ENCODE measurements at regions of chr1 and their contacts with region 1.

Region 1: DNA sequence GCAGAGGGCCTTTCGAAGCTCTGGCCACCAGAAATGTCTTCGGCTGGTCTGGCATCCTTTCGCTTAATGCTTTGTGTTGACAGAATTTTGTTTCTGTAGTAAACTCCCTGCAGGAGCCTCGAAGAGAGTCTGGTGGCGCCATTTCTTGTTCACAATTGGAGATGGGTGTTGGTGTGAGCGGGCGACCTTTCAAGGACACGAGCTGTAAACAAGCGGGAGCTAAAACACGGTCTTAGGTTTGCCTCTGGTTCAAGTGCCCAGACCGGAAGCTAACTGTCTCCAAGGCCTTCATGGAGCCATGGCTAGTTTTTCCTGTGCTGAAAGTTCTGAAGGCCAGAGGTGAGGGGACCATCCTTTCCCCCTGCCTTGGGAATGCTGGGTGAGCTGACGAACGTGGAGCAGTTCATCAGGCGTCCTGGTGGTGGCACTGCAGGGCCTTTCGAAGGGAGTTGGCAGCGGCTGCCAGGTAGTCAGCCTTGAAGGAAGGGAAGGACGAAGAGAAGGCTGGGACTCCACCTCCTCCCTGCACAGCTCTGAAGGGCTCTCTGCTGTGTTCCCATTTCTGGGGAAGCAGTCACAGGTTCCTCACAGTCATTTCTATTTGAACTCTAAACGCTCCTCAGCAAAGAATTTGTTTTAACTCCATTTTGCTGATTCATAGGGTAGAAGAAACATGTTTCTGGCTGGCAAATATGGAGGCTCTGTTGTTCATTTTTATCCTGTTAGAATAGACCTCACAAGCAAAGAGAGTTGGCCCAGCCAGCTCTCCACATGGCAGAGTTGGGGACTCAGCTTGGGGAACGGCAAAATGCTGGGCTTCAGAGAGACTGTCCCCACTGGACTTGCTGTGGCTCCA is 35.2 kb downstream of the URB2 start:
- DNase-seq: peak in 1 of 2 donors; percentile 89
- H3K4me3 ChIP-seq: no peak overlapping the region
- H3K27ac ChIP-seq: peak overlapping the region in 1 of 2 donors; percentile 10
- H3K4me1 ChIP-seq: no peaks in the 10 kb centered on the region
- H3K27me3 ChIP-seq: no peaks in the 10 kb centered on the region
- CTCF ChIP-seq: peak; percentile 84 to 91 (median 85)

Region 2: DNA sequence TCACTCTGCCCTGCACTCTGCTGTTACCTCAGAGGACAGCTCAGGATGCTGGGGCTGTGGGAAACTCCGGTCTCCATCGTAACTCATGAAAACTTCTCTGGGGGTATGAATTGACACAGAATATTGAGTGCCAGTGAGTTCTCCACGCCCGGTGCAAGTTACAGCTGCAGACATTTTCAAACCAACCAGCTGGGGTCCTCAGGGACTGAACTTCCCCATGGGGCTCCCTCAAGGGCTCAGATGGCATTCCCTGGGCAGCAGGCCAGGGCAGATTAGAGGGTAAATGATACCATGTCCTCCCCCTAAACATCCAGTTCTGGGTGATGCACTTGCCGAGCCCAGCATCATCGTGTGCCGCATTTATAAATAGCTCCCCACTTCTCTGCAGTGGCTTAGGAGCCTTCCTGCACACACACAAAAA is 290.6 kb before region 1 on chr1:
- intact Hi-C with region 1: no loop called
- DNase-seq: no peak
- H3K4me3 ChIP-seq: no peak overlapping the region
- H3K27ac ChIP-seq: no peak overlapping the region
- H3K4me1 ChIP-seq: no peaks in the 10 kb centered on the region
- H3K27me3 ChIP-seq: no peaks in the 10 kb centered on the region
- CTCF ChIP-seq: peak in 1 of 3 experiments; percentile 14

Region 3: GRCh38 chr1:229694053-229694693 is 32.9 kb after region 1 on chr1:
- intact Hi-C with region 1: no loop called
- DNase-seq: peak in 1 of 2 donors; percentile 66
- H3K4me3 ChIP-seq: no peak overlapping the region
- H3K27ac ChIP-seq: no peak overlapping the region
- H3K4me1 ChIP-seq: no peaks in the 10 kb centered on the region
- H3K27me3 ChIP-seq: no peaks in the 10 kb centered on the region
- CTCF ChIP-seq: no peak

Region 4: GRCh38 chr1:230310381-230311163 is 649.3 kb after region 1 on chr1:
- intact Hi-C with region 1: loop called (anchors 1 kb)
- DNase-seq: peak in 1 of 2 donors; percentile 89
- H3K4me3 ChIP-seq: no peak overlapping the region
- H3K27ac ChIP-seq: no peak overlapping the region
- H3K4me1 ChIP-seq: peaks cover 0 to 2% of the 10 kb centered on the region in 2 donors
- H3K27me3 ChIP-seq: no peaks in the 10 kb centered on the region
- CTCF ChIP-seq: peak; percentile 86 to 93 (median 90)

Measured in ascending aorta (tissue), 2 donors.